Calu3 (cell line): ENCODE measurements at regions of chr4 and their contacts with region 1.

Region 1: DNA sequence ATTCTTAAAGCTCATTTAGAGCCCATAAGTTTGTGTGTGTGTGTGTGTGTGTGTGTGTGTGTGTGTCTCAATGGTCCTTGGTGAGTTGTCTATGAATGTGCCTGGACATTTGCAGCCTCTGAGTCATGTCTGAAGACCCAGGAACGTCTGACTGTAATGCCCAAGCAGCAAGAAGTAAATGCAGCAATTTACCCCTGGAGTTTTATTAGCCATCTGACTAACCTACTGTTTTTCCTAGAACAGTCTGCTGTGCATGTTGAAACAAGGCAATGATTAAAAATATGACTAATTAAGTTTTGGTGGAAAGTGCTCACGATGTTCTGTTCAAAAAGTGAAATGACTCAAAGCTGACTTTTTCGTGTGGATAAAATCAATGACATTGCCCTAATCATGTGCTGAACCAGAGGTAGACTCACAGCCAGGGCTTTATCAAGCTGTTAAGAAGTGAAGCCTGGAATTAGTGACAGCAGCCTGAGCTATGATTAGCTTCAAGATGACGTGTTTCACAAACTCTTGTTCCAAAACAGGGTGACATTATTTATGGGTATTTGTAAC is 201.6 kb downstream of the CPE start:
- DNase-seq: peak; percentile 1
- H3K4me3 Mint-ChIP-seq: no peak overlapping the region
- H3K27ac Mint-ChIP-seq: no peak overlapping the region
- H3K4me1 Mint-ChIP-seq: peaks cover 22% of the 10 kb centered on the region
- H3K27me3 Mint-ChIP-seq: no peaks in the 10 kb centered on the region
- CTCF ChIP-seq: no peak

Region 2: DNA sequence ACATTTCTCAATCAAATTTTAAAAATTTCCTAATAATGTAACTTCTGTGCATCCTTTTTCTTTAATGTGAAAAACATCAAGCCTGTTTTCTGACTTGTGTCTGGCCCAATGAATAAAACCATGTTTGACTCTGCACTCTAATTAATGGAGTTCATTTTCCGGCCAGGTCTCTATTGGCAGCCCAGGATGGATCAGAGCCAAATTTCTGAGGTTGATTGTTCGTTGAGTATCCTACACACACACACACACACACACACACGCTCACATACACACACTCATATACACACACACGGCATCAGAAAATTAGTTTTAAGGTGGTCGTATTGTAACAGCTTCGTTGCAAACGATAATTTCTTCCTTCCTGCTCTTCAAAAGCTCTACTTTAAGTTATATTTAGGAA is 263.7 kb after region 1 on chr4:
- CTCF ChIA-PET with region 1: no interaction called
- intact Hi-C with region 1: loop called (anchors 10 kb)
- DNase-seq: no peak
- H3K4me3 Mint-ChIP-seq: no peak overlapping the region
- H3K27ac Mint-ChIP-seq: no peak overlapping the region
- H3K4me1 Mint-ChIP-seq: peaks cover 6% of the 10 kb centered on the region
- H3K27me3 Mint-ChIP-seq: no peaks in the 10 kb centered on the region
- CTCF ChIP-seq: no peak